ENCODE measurements at regions of chr9 and their contacts with region 1.

Region 1: GRCh38 chr9:6827439-6827838 is 69.7 kb downstream of the KDM4C start:
- DNase-seq: no peak
- H3K4me3 ChIP-seq: no peak overlapping the region
- H3K27ac ChIP-seq: no peak overlapping the region
- H3K4me1 ChIP-seq: no peaks in the 10 kb centered on the region
- H3K27me3 ChIP-seq: no peaks in the 10 kb centered on the region
- CTCF ChIP-seq: peak; percentile 66

Region 2: GRCh38 chr9:6716766-6717165 is 110.7 kb before region 1 on chr9:
- CTCF ChIA-PET with region 1: no interaction called
- POLR2A ChIA-PET with region 1: no interaction called
- intact Hi-C with region 1: no loop called
- DNase-seq: no peak
- H3K4me3 ChIP-seq: peak overlapping the region; percentile 87
- H3K27ac ChIP-seq: peak overlapping the region; percentile 71; the same call in 1 of the 2 replicates
- H3K4me1 ChIP-seq: no peaks in the 10 kb centered on the region
- H3K27me3 ChIP-seq: no peaks in the 10 kb centered on the region
- CTCF ChIP-seq: no peak

Region 3: DNA sequence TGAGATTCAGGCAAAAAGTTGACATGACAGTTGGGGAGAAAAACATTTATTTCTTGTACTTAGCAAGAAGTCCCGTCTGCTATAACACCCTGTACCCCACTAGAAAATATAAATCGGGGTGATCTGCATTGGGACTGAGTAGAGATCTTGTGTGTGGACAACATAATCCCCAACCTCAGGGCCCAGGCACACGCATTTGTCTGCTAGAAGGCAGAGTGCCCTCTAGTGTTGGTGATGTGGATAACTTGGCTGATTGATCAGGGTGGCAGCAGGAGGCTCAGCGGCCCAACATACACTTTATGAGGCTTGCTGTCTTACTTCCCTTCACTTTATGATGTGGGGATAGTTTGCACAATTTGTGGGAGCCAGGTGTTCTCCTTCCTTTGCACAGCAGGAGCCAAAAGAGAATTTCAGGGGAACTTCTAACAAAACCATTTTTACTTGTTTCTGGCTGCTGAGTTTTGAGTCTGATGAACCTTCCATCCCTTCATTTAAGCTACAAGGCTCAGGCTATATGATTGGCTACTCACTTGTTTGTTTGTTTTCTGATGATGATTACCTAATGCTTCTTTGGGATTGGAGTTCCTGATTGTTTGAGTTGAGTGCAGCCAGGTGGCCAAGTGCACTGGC is 709.0 kb after region 1 on chr9:
- CTCF ChIA-PET with region 1: no interaction called
- POLR2A ChIA-PET with region 1: no interaction called
- intact Hi-C with region 1: loop called (anchors 5 kb)
- DNase-seq: peak in 1 of 2 experiments; percentile 1
- H3K4me3 ChIP-seq: no peak overlapping the region
- H3K27ac ChIP-seq: no peak overlapping the region
- H3K4me1 ChIP-seq: no peaks in the 10 kb centered on the region
- H3K27me3 ChIP-seq: no peaks in the 10 kb centered on the region; the same call in 1 of the 2 replicates
- CTCF ChIP-seq: peak; percentile 52

Region 4: DNA sequence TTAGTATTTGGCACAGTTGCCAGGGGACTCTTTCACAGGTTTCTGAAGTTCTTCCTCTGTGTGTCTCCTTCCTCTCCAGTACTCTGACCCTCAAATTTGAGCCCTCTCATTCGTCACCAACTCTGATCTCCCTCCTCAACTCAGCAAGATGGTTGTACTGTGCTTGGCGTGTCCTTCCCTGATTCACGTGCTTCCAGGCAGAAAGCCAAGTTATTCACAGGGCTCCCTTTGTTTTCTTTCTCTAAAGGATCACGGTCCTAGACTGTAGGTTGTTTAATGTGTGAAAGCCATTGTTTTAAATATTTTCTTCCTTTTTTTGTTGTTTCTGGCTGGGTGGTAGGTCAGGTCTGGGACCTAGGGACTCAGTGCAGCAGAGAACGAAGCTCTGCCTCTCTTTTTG is 829.2 kb after region 1 on chr9:
- CTCF ChIA-PET with region 1: no interaction called
- POLR2A ChIA-PET with region 1: no interaction called
- intact Hi-C with region 1: loop called (anchors 10 kb)
- DNase-seq: no peak
- H3K4me3 ChIP-seq: no peak overlapping the region
- H3K27ac ChIP-seq: no peak overlapping the region
- H3K4me1 ChIP-seq: no peaks in the 10 kb centered on the region
- H3K27me3 ChIP-seq: 0 out of 2 replicates have a peak, but pooled peaks cover 7% of the 10 kb centered on the region
- CTCF ChIP-seq: no peak